ENCODE measurements at regions of chr12 and their contacts with region 1.

Region 1: DNA sequence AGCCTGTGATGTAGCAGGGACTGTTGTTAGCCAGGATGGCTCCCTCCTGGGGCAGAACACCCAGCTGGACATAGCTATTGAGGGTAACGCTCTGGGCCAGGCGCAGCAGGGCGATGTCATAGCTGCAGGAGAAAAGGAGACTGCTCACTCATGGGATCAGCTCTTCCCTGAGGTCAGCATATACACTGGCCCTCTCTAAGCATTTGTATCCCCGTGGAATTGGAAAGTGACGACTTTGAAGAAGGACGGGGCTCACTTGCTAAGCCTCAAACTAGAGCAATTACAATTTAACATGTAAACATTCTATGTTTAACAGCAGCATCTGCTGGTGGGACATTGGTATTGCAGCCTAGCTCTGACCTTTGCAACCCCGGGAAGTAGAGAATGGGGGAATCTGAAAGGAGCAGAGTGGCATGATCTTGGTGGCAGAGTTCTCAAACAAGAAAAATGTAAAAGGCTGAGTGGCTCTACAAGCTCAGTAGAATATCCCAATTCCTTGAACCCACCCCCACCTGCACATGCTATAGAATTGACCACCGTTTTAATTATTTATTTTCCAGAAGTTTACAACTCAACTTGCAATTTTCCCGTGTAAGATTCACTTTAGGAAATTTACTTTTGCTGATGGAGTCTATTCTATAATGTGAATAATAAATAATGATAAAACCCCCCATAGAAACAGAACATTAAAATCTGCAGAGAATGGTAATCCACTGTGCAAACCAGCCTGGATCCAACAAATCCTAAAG is 5.0 kb downstream of the CELA1 start:
- DNase-seq: peak; percentile 72
- CTCF ChIP-seq: peak; percentile 99

Region 2: DNA sequence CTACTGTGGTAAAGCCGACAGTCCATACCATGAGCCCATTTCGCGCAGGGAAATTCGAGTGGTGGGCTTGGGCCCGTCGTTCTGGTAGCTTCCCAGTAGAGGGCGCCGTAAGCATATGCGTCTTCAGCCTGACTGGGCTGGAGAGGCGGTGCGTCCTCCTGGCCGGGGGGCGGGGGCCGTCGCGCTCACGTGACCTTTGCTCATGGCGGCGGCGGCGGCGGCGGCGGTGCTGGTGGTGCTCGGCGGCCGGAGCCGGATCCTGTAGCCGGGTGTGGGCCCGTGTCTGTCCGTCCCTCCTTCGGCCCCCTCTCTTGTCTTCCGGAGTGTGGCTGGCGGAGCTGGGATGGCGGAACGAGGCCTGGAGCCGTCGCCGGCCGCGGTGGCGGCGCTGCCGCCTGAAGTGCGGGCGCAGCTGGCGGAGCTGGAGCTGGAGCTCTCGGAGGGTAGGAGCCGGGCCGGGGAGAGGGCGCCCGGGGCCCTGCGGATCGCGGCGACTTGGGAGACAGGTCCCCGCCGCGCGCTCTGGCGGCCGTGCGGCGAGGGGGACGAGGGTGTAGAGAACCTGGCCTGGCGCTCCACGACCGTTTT is 836.5 kb before region 1 on chr12 and contains the start of gene DIP2B:
- in situ Hi-C with region 1: loop called (anchors 25 kb)
- DNase-seq: peak; percentile 89
- CTCF ChIP-seq: peak; percentile 96

Region 3: DNA sequence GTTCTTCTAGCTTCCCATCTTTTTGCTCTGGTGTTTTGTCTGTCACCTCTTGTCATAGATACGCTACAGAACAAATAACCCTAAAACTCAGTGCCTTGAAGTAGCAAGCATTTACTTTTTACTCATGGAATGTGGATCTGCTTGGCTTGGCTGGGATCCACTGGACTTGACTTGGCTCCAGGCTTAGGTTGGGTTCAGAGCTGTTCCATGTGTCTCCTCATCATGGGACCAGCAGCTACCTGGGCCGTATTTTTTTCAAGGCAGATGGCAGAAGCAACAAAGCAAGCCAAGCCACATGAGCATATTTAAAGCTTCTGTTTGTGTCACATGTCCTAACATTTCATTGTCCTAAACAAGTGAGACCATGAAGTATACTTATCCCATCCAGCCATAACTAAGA is 626.3 kb before region 1 on chr12:
- in situ Hi-C with region 1: no loop called
- DNase-seq: no peak
- CTCF ChIP-seq: no peak

Region 4: DNA sequence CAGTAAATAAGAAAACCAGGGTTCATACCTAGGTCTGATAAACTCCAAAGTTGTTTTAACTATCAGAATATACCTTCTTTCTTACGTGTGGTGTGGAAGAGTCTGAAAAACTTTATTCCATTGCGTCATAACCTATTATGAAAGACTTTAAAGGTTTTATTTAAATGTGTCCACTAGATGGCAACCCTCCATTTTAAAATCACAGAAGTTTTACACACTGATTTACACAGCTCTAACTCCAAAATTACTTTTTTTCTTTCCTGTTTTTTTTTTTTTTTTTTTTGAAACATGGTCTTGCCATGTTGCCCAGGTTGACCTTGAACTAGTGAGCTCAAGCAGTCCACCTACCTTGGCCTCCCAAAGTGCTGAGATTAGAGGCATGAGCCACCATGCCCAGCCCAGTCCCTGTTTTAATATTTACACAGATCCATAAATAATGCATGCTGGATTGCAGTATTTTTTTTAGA is 516.0 kb before region 1 on chr12:
- in situ Hi-C with region 1: loop called (anchors 25 kb)
- DNase-seq: peak; percentile 39
- CTCF ChIP-seq: peak; percentile 41

Region 5: GRCh38 chr12:50842637-50843493 is 498.6 kb before region 1 on chr12 and contains the start of gene TMPRSS12:
- in situ Hi-C with region 1: no loop called
- DNase-seq: no peak
- CTCF ChIP-seq: no peak

Region 6: DNA sequence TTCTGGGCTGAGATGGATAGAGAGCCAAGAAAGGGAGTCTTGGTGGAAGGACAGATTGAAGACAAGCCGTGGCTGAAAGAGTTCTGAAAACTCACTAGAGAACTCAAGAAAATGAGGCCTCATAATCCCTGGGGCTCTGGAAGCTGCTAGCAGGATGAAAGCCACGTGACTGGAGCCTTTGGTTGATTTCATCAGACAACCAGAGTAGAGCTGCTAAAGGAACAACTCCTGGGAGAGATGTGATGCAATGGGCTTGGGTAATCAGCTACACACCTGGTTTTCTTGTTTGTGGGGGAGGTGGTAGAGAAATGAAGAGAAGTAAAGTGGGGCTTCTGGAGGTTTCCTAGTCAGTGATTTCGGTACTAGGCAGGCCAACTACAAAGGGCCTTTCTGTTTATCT is 271.4 kb before region 1 on chr12:
- in situ Hi-C with region 1: loop called (anchors 25 kb)
- DNase-seq: no peak
- CTCF ChIP-seq: no peak

Measured in GM13977 (cell line).